Heart right ventricle (tissue), 16 donors: ENCODE measurements at regions of chr11 and their contacts with region 1.

Region 1: DNA sequence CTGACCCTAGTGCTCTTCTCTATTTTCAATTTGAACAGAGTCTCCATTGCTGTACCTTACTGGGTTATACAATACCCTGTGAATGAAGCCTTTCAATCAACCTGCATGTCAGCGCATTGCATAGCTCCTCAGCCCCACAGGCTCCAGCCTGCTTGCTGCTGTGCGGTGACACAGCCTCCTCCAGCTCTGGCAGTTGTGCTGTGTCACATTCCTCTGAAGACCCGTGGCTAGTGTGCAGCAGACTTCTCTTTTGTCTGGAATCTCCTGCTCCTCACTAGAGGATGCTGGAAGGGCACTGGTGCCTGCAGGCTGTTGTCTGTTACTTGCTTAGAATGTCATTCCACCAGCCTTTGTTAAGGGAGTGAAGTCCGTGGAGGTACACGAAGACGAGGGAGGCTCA is 390.1 kb upstream of the B3GAT1 start:
- DNase-seq: no peak
- ATAC-seq: no peak
- H3K4me3 ChIP-seq: no peak overlapping the region
- H3K27ac ChIP-seq: no peak overlapping the region
- H3K4me1 ChIP-seq: no peaks in the 10 kb centered on the region
- H3K27me3 ChIP-seq: peaks cover 0 to 90% (median 53%) of the 10 kb centered on the region in 7 donors
- CTCF ChIP-seq: no peak

Region 2: GRCh38 chr11:134164490-134165370 is 637.4 kb before region 1 on chr11:
- intact Hi-C with region 1: no loop called
- DNase-seq: no peak
- ATAC-seq: no peak
- H3K4me3 ChIP-seq: no peak overlapping the region
- H3K27ac ChIP-seq: no peak overlapping the region
- H3K4me1 ChIP-seq: no peaks in the 10 kb centered on the region
- H3K27me3 ChIP-seq: no peaks in the 10 kb centered on the region
- CTCF ChIP-seq: no peak

Region 3: DNA sequence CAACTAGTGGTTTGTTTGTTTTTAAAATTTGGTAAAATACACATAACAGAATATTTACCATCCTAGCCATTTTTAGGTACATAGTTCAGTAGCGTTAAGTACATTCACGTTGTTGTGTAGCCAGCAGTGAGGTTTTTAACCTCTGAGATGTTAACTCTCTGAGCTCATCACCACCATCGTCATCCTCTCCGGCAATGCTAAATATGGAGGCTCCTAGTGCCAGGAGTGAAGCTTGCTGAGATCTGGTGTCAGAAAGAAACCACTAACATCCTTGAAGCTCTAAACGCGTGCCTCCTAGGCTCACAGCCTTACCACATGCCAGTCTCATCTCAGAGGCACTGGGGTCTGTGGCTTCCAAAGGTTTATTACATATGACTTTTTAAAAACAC is 59.9 kb before region 1 on chr11:
- intact Hi-C with region 1: loop called in 1 of 10 experiments (anchors 10 kb)
- DNase-seq: no peak
- ATAC-seq: no peak
- H3K4me3 ChIP-seq: no peak overlapping the region
- H3K27ac ChIP-seq: no peak overlapping the region
- H3K4me1 ChIP-seq: peaks cover 0 to 15% (median 0%) of the 10 kb centered on the region in 9 donors
- H3K27me3 ChIP-seq: peaks cover 0 to 35% (median 0%) of the 10 kb centered on the region in 7 donors
- CTCF ChIP-seq: no peak